Left cardiac atrium (tissue), 4 donors: ENCODE measurements at regions of chr21 and their contacts with region 1.

Region 1: DNA sequence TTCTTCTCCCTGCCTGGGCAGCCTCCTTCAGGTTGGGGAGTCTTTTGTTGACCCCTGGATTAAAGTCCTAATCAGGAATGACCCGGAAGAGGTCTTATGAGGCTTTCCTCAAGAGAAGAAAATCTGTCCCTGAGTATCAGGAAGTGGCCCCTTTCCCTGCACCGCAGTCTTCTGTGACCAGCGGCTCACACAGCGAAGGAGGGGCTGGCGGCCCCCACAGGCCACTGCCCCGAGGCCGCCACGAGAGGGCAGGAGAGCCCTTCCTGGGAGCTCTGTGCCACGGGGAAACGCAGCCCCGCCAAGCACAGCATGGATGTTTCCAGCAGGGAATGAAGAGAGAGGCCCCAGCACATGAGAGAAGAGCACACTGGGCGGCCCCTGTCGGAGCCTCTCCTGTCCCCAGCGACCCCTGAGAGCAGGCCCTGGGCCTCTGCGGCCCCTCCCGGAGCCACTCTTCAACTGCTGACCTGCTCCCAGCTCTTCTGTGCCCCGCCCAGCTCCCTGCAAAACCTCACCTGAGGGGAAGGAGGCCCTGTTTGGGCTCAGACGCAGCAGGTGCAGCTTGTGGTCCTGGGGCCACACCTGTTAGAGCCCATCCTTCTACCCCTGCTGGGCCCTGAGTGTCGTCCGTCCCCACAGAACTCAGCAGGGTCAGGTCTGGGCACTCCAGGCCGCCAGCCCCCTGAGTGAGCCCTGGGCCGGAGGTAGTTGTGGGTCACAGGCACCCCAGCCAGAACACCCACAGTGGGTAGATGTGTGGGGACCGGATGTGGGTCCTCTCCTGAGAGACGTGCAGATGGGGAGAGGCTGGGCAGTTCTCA is 4.9 kb upstream of the POFUT2 start:
- DNase-seq: peak; percentile 90
- ATAC-seq: peak; percentile 72 to 73

Region 2: DNA sequence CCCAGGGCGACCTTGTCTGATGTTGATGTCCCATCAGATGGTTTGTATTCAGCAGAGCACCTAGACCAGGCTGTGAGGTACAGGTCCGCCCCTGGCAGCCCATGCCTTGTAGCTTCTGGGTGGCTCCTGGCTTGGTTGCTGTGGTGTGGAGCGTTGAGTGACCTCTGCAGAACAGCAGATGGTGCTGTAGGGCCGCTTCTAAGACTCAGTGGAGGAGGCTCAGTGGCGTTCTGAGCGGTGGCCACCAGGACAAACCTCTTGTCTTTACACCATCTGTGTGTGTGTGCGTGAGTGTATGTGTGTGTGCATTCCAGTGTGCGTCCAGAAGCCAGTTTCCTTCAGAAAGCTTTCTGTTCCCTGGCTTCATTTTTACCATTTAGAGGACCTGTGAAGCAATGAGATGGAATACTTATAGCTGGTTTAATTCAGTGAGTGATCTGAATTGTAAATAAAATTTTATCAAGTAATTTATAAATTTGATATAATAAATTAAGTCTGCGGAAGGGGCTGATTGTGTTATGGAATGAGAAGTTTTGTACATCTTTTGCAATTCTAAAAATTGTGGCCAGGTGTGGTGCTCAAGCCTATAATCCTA is 152.2 kb before region 1 on chr21:
- intact Hi-C with region 1: loop called in 1 of 2 experiments (anchors 5 kb)
- DNase-seq: peak; percentile 79
- ATAC-seq: peak; percentile 83 to 87

Region 3: DNA sequence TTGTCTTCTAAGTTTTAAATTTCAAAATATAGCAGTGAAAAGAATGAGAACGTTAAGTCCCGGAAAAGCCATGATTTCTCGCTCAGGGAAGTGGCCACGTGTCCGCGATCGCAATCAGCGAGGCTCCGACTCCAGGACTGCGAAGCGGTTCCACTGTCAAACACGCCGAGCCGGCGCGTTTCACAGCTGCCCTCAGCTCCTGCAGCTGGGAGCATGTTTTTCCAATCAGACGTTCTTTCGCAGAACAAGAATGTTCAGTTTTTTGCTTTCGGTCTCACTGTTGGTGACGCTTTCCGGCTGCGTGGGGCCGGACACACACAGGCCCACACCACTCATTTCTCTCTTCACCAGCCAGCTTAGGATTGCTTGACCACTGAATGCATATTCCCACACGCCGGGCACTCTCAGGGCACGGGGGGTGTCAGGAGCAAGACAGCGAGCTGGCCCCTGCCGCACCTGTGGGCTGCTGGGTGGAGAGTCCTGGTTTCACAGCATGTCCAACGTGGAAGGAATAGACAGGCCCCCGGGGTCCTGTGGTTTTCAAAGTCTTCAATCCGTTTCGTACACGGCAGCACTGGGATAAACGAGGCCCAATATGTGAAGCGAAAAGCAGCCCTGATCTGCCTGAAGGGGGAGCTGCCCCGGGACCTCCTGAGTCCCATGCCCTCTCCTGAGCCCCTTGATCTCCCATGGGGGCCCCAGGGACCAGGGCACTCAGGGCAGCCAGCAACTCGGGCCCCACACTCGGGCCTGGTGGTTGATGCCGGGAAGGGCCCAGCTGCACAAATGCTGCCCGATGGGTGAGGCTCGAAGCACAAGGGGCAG is 65.0 kb after region 1 on chr21:
- intact Hi-C with region 1: loop called in 1 of 2 experiments (anchors 5 kb)
- DNase-seq: peak; percentile 80
- ATAC-seq: peak; percentile 58 to 64

Region 4: GRCh38 chr21:45386721-45387371 is 94.2 kb after region 1 on chr21:
- intact Hi-C with region 1: no loop called
- DNase-seq: peak; percentile 63
- ATAC-seq: peak; percentile 76 to 77

Region 5: GRCh38 chr21:45439161-45439872 is 146.7 kb after region 1 on chr21:
- intact Hi-C with region 1: loop called (anchors 1 to 5 kb)
- DNase-seq: peak; percentile 88
- ATAC-seq: peak; percentile 86 to 87

Region 6: GRCh38 chr21:45590246-45590725 is 297.7 kb after region 1 on chr21:
- intact Hi-C with region 1: loop called in 1 of 2 experiments (anchors 5 kb)
- DNase-seq: peak; percentile 79
- ATAC-seq: peak; percentile 86 to 94